ENCODE measurements at regions of chr7 and their contacts with region 1.

Region 1: DNA sequence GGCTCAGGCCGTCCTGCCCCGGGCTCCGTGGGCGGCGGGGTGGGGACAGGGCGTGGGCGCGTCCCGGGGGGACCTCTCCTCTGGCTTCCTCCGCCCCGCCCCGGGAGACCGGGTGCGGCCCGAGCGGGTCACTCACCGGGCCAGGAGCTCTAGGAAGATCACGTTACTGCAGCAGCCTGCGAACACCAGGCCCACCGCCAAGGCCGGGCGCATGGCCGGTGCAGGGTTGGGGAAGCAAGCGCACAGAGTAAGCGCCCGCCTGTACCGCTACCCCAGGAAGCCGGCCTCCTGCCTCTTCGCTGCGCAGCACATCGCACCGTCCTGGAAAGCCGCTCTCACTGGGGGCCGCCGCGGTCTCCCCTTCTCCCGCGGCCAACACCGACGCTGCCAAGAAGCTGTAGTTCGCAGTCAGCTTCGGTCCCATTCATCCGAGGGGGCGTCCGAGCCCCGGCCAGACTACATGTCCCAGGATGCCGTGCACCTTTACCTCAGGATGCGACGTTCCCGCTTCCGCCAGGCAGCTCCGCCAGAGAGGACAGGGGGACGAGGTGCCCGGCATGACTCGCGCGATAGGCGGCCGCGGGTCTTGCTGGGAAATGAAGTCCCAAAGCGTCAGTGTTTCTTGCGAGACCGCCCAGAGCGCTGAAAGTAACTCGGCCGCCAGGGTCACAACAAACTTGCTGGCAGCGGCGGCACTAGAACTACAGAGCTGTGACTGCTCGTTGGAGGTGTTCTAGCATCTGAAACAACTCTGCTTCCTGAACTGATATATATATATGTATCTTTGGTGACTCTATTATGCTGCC is at the start of gene SLC35B4:
- DNase-seq: peak; percentile 94
- ATAC-seq: peak; percentile 98
- H3K4me3 ChIP-seq: peak within 1 kb of the TSS; percentile 52 to 95 (median 84)
- H3K4me3 Mint-ChIP-seq: peak within 1 kb of the TSS; percentile 95
- H3K27ac ChIP-seq: peak within 1 kb of the TSS; percentile 46 to 68
- H3K27ac Mint-ChIP-seq: peak within 1 kb of the TSS; percentile 85
- H3K4me1 ChIP-seq: peaks cover 10 to 14% of the 10 kb centered on the region in 2 donors
- H3K4me1 Mint-ChIP-seq: peaks cover 18% of the 10 kb centered on the region
- H3K27me3 ChIP-seq: no peaks in the 10 kb centered on the region
- H3K27me3 Mint-ChIP-seq: no peaks in the 10 kb centered on the region
- CTCF ChIP-seq: peak; percentile 41
- total RNA-seq, gene SLC35B4: 8.0 and 14.8 TPM in 2 replicates

Region 2: GRCh38 chr7:133252858-133253518 is 1063.8 kb before region 1 on chr7 and contains the start of gene EXOC4:
- CTCF ChIA-PET with region 1: no interaction called
- POLR2A ChIA-PET with region 1: no interaction called
- intact Hi-C with region 1: loop called (anchors 1 kb)
- DNase-seq: peak; percentile 97
- ATAC-seq: peak; percentile 99
- H3K4me3 ChIP-seq: peak within 1 kb of the TSS; percentile 66 to 93 (median 89)
- H3K4me3 Mint-ChIP-seq: peak within 1 kb of the TSS; percentile 89
- H3K27ac ChIP-seq: peak within 1 kb of the TSS; percentile 50 to 85
- H3K27ac Mint-ChIP-seq: peak within 1 kb of the TSS; percentile 91
- H3K4me1 ChIP-seq: peaks cover 4 to 7% of the 10 kb centered on the region in 2 donors
- H3K4me1 Mint-ChIP-seq: peaks cover 28% of the 10 kb centered on the region
- H3K27me3 ChIP-seq: no peaks in the 10 kb centered on the region
- H3K27me3 Mint-ChIP-seq: no peaks in the 10 kb centered on the region
- CTCF ChIP-seq: no peak
- total RNA-seq, gene EXOC4: 132 and 135 TPM in 2 replicates

Region 3: DNA sequence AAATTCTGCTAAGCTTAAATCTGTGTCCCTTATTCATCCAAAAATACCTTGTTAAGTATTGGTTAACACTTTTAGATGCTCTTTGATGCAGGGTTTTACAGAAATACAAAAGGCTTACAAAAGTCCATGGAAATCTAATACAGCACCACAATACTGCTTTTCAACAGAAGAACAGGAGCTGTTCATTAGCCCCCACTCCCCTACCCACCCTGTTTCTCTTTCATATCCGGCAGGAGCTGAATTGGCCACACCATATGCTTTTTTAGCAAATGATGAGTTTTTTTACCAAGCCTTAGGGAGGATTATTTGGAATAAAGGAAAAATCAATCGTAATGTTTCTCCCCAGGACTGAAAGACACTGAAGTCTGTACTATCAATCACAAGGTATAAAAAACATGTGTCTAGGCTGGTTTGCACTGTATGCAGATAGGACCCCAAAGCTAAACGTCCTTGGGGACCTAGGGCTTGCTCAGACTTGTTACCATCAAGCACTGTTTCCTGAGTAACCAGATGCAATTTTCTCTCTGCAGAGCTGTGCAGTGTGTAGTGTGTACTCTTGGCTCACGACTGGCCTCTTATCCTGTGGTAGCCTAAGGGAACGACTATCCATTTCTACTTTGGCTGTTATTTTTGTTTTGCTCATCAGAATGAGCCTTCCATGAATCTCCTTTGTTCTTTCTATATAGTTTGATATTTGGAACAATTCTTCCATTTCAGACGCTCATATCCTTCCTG is 332.9 kb before region 1 on chr7:
- CTCF ChIA-PET with region 1: no interaction called
- POLR2A ChIA-PET with region 1: no interaction called
- intact Hi-C with region 1: no loop called
- DNase-seq: no peak
- ATAC-seq: no peak
- H3K4me3 ChIP-seq: no peak overlapping the region
- H3K4me3 Mint-ChIP-seq: no peak overlapping the region
- H3K27ac ChIP-seq: no peak overlapping the region
- H3K27ac Mint-ChIP-seq: no peak overlapping the region
- H3K4me1 ChIP-seq: no peaks in the 10 kb centered on the region
- H3K4me1 Mint-ChIP-seq: no peaks in the 10 kb centered on the region
- H3K27me3 ChIP-seq: no peaks in the 10 kb centered on the region
- H3K27me3 Mint-ChIP-seq: no peaks in the 10 kb centered on the region
- CTCF ChIP-seq: no peak

Region 4: GRCh38 chr7:134293002-134293740 is 23.6 kb before region 1 on chr7:
- CTCF ChIA-PET with region 1: interaction called, 3 read pairs
- POLR2A ChIA-PET with region 1: interaction called, 4 read pairs
- intact Hi-C with region 1: loop called (anchors 1 kb)
- DNase-seq: peak; percentile 77
- ATAC-seq: peak; percentile 98
- H3K4me3 ChIP-seq: no peak overlapping the region
- H3K4me3 Mint-ChIP-seq: peak overlapping the region; percentile 52
- H3K27ac ChIP-seq: peak overlapping the region in 1 of 2 donors; percentile 42
- H3K27ac Mint-ChIP-seq: peak overlapping the region; percentile 78
- H3K4me1 ChIP-seq: peaks cover 15% of the 10 kb centered on the region in 2 donors
- H3K4me1 Mint-ChIP-seq: peaks cover 17% of the 10 kb centered on the region
- H3K27me3 ChIP-seq: no peaks in the 10 kb centered on the region
- H3K27me3 Mint-ChIP-seq: no peaks in the 10 kb centered on the region
- CTCF ChIP-seq: no peak

Measured in B cell (primary cell).